ENCODE measurements at regions of chr9 and their contacts with region 1.

Region 1: GRCh38 chr9:120202856-120203654 is 376.9 kb downstream of the CDK5RAP2 start:
- DNase-seq: no peak
- ATAC-seq: no peak
- H3K4me3 Mint-ChIP-seq: no peak overlapping the region
- H3K27ac Mint-ChIP-seq: no peak overlapping the region
- H3K4me1 Mint-ChIP-seq: no peaks in the 10 kb centered on the region
- H3K27me3 Mint-ChIP-seq: no peaks in the 10 kb centered on the region

Region 2: DNA sequence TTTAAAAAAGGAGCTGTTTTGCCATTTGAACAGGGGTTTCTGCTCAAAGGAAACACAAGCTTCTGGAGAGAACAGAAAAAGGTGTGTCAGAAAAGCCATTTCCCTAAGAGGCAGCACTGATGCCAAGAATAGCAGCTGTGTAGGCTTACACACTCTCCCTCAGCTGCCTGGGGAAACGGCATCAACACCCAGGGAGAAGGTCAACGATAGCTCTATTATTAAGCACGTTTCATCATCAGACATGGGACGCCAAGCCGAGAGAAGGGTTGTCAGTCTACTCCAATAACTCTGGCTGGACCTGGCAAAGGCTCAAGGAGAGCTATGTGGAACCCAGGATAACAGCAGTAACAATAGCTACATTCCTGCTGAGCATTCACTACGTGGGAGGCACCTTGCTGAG is 62.7 kb after region 1 on chr9:
- CTCF ChIA-PET with region 1: no interaction called
- POLR2A ChIA-PET with region 1: no interaction called
- intact Hi-C with region 1: loop called in 1 of 2 experiments (anchors 10 kb)
- DNase-seq: no peak
- ATAC-seq: no peak
- H3K4me3 Mint-ChIP-seq: no peak overlapping the region
- H3K27ac Mint-ChIP-seq: no peak overlapping the region
- H3K4me1 Mint-ChIP-seq: no peaks in the 10 kb centered on the region
- H3K27me3 Mint-ChIP-seq: peaks cover 4% of the 10 kb centered on the region

Region 3: DNA sequence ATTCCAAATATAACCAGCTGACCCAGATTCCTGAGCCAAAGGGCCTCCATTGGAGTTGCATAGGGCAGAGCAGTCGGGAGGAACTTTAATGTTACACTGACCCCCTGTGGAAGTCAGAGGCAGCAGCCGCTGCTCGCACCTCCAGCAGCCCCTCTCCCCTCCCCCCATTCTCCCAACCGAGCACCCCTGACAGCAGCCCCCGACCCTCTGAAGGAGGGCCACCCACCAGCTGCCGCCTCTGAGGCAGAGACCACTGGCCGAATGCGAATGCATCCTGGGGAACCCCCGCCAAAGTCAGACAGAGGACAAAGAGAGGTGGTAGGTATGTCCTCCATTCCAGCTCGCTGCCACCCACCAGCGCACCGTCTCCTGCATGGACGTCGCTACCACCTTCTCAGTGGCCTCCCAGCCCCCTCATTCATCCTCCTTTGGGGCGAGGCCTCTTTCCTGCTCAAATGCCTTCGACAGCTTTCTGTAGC is 145.9 kb after region 1 on chr9:
- CTCF ChIA-PET with region 1: no interaction called
- POLR2A ChIA-PET with region 1: no interaction called
- intact Hi-C with region 1: no loop called
- DNase-seq: peak; percentile 51
- ATAC-seq: peak; percentile 36
- H3K4me3 Mint-ChIP-seq: no peak overlapping the region
- H3K27ac Mint-ChIP-seq: no peak overlapping the region
- H3K4me1 Mint-ChIP-seq: peaks cover 3% of the 10 kb centered on the region
- H3K27me3 Mint-ChIP-seq: no peaks in the 10 kb centered on the region

Measured in activated CD4-positive, alpha-beta T cell treated with anti-CD3 and anti-CD28 coated beads for 36 hours (primary cell).